SK-N-SH (cell line): ENCODE measurements at regions of chr11 and their contacts with region 1.

Region 1: GRCh38 chr11:2885676-2886081 is at the start of gene CDKN1C:
- DNase-seq: peak; percentile 98
- H3K4me3 ChIP-seq: peak within 1 kb of the TSS; percentile 58 to 65
- H3K27ac ChIP-seq: peak within 1 kb of the TSS in 1 of 2 experiments; percentile 83; a peak in 1 of 4 replicates
- H3K4me1 ChIP-seq: peaks cover 3 to 36% of the 10 kb centered on the region in 2 experiments; a peak in 1 of 4 replicates
- H3K27me3 ChIP-seq: no peaks in the 10 kb centered on the region
- CTCF ChIP-seq: no peak
- EP300 ChIP-seq: no peak
- RAD21 ChIP-seq: no peak
- polyA plus RNA-seq, gene CDKN1C: 1.1 and 1.6 TPM in 2 replicates

Region 2: GRCh38 chr11:2555336-2556290 is 330.1 kb before region 1 on chr11:
- CTCF ChIA-PET with region 1: interaction called, 14 read pairs
- POLR2A ChIA-PET with region 1: no interaction called
- DNase-seq: no peak
- H3K4me3 ChIP-seq: no peak overlapping the region
- H3K27ac ChIP-seq: no peak overlapping the region
- H3K4me1 ChIP-seq: no peaks in the 10 kb centered on the region
- H3K27me3 ChIP-seq: no peaks in the 10 kb centered on the region
- CTCF ChIP-seq: no peak
- EP300 ChIP-seq: no peak
- RAD21 ChIP-seq: no peak

Region 3: GRCh38 chr11:2675540-2675939 is 210.1 kb before region 1 on chr11:
- CTCF ChIA-PET with region 1: interaction called, 10 read pairs
- POLR2A ChIA-PET with region 1: interaction called, 9 read pairs
- DNase-seq: peak; percentile 90
- H3K4me3 ChIP-seq: no peak overlapping the region
- H3K27ac ChIP-seq: peak overlapping the region in 1 of 2 experiments; percentile 89; a peak in 2 of 4 replicates
- H3K4me1 ChIP-seq: peaks cover 0 to 57% of the 10 kb centered on the region in 2 experiments; a peak in 2 of 4 replicates
- H3K27me3 ChIP-seq: no peaks in the 10 kb centered on the region
- CTCF ChIP-seq: no peak
- EP300 ChIP-seq: peak in 1 of 2 experiments; percentile 88; a peak in 2 of 4 replicates
- RAD21 ChIP-seq: no peak; the same call in 1 of the 2 replicates

Region 4: DNA sequence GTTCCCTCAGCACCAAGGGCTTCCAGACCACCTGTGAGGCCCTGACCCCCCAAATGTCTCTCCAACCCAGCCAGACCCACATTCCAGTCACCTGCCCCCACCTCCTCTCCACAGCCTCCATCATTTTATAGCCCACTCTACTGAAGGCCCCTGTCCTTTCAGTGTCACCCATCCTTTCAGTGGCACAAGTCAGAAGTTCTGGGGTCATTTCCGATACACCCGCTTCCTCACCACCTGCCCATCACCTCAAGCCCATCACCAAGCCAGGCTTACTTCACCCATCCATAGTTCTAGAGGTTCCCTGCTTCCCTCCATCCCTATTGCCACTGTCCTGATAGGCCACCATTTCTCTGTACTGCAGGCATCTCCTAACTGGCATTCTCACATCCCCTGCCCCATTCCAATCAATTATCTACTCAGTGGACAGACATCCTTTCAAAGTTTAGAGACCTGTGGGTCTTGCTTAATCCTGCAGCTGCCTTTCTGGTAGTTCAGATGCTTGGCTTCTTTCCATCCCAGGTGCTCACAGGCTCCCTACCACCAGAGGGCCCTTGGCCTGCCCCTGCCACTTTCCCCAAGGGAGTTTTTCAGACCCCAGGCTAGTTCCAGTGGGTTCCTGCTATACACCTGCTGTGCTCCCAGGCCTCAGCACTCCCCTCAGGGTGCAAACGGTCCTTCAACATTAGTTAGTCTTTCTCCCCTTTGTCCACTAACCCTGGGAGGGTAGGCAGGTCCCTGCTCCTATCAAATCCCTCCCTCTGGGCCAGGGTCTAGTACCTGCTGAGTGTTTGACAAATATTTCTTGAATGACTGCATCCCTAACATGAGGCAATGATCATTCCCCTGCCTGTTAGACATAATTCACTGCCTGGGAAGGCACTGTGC is 193.4 kb before region 1 on chr11:
- CTCF ChIA-PET with region 1: interaction called, 17 read pairs
- POLR2A ChIA-PET with region 1: no interaction called
- DNase-seq: no peak
- H3K4me3 ChIP-seq: no peak overlapping the region
- H3K27ac ChIP-seq: no peak overlapping the region
- H3K4me1 ChIP-seq: peaks cover 0 to 66% of the 10 kb centered on the region in 2 experiments; a peak in 1 of 4 replicates
- H3K27me3 ChIP-seq: no peaks in the 10 kb centered on the region
- CTCF ChIP-seq: peak; percentile 18; the same call in 1 of the 2 replicates
- EP300 ChIP-seq: no peak
- RAD21 ChIP-seq: peak; percentile 18; the same call in 1 of the 2 replicates

Region 5: DNA sequence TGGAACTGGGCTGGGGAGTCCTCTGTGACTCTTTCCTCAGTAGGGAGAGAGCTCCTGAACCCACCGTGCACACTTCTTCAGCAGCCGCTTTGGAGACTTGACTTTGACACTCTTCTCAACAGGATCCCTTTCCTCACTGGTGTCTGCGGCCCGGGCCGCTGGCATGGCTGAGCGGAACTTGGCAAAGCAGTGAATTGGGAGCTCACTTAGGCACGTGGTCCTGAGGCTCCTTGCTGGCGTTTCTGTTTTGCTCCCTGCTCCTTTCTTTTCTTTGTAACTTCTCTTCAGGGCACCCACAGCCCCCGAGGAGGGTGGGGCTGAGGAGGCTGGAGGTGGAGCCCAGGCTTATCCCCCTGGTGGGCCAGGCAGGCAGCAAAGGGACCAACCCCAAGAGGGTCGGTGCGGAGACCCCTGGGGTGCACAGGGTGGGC is 177.5 kb before region 1 on chr11:
- CTCF ChIA-PET with region 1: interaction called, 14 read pairs
- POLR2A ChIA-PET with region 1: interaction called, 4 read pairs
- DNase-seq: no peak
- H3K4me3 ChIP-seq: no peak overlapping the region
- H3K27ac ChIP-seq: peak overlapping the region in 1 of 2 experiments; percentile 76; a peak in 1 of 4 replicates
- H3K4me1 ChIP-seq: peaks cover 0 to 60% of the 10 kb centered on the region in 2 experiments; a peak in 1 of 4 replicates
- H3K27me3 ChIP-seq: no peaks in the 10 kb centered on the region
- CTCF ChIP-seq: no peak
- EP300 ChIP-seq: no peak
- RAD21 ChIP-seq: no peak

Region 6: DNA sequence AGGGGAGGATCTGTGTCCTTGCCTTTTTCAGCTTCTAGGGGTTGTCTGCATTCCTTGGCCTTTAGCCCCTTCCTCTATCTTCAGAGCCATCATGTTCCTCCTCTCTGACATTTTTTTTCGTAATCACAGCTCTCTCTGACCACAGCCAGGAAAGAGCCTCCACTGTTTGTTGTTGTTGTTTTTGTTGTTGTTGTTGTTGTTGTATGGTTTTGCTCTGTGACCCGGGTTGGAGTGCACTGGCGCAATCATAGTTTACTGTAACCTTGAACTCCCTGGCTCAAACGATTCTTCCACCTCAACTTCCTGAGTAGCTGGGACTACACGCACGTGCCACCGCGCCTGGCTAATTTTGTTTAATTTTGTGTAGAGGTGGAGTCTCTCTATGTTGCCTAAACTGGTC is 130.6 kb before region 1 on chr11:
- CTCF ChIA-PET with region 1: no interaction called
- POLR2A ChIA-PET with region 1: no interaction called
- DNase-seq: no peak
- H3K4me3 ChIP-seq: no peak overlapping the region
- H3K27ac ChIP-seq: no peak overlapping the region
- H3K4me1 ChIP-seq: peaks cover 3 to 14% of the 10 kb centered on the region in 2 experiments; a peak in 2 of 4 replicates
- H3K27me3 ChIP-seq: no peaks in the 10 kb centered on the region
- CTCF ChIP-seq: no peak
- EP300 ChIP-seq: no peak
- RAD21 ChIP-seq: no peak

Region 7: DNA sequence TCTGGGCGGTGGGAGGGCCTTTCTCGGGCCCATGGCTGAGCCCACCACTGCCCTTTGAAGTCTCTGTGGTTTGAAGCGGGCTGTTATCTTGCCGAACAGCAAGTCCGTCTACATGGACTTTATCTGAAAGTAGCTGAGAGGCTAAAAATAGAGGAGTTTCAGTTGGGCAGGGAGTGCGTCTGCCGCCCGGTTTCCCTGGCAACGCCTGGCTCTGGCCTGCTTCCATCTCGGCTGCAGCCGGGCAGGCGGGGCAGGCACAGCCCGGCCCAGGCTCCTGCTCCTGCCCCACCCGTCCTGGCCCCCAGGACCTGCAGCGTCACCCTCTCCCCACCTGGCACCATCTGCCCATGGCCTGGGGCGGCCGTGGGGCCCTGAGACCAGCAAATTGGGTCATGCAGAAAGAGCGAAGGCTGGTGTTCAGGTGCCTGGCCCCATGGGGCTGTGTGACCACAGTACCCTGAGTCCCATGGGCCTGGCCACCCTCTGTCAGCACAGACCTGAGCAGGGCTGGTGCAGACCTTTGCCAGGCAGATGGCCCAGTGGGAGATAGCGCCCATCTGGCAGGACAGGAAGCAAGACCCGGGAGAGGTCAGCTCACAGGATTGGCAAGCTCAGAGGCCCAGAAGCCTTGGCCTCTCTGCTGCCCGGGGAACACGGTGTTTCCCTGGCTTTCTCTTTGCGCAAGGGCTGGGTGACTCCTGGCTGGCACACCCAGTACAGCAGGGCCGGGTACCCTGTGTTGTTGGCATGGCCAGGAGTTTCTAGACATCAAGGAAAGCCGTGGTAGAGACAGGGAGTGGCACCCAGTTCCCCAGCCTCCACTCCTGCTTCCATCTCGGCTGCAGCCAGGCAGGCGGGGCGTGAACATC is 106.8 kb before region 1 on chr11:
- CTCF ChIA-PET with region 1: interaction called, 96 read pairs
- POLR2A ChIA-PET with region 1: interaction called, 25 read pairs
- DNase-seq: peak; percentile 93
- H3K4me3 ChIP-seq: peak overlapping the region in 1 of 2 experiments; percentile 4; a peak in 1 of 4 replicates
- H3K27ac ChIP-seq: peak overlapping the region; percentile 72 to 99
- H3K4me1 ChIP-seq: peaks cover 10 to 73% of the 10 kb centered on the region in 2 experiments; a peak in 3 of 4 replicates
- H3K27me3 ChIP-seq: no peaks in the 10 kb centered on the region
- CTCF ChIP-seq: no peak
- EP300 ChIP-seq: peak in 1 of 2 experiments; percentile 58; a peak in 2 of 4 replicates
- RAD21 ChIP-seq: peak; percentile 62